CD4-positive, alpha-beta T cell (primary cell): ENCODE measurements at regions of chr12 and their contacts with region 1.

Region 1: GRCh38 chr12:48851883-48852733 is at the start of gene DDX23:
- DNase-seq: peak; percentile 82 to 98 (median 88)
- ATAC-seq: peak; percentile 93
- H3K4me3 ChIP-seq: peak within 1 kb of the TSS; percentile 81
- H3K4me3 Mint-ChIP-seq: peak within 1 kb of the TSS; percentile 98
- H3K27ac ChIP-seq: peak within 1 kb of the TSS; percentile 83 to 94
- H3K27ac Mint-ChIP-seq: peak within 1 kb of the TSS; percentile 93
- H3K4me1 ChIP-seq: peaks cover 47% of the 10 kb centered on the region
- H3K4me1 Mint-ChIP-seq: peaks cover 47% of the 10 kb centered on the region
- H3K27me3 ChIP-seq: no peaks in the 10 kb centered on the region
- H3K27me3 Mint-ChIP-seq: no peaks in the 10 kb centered on the region
- CTCF ChIP-seq: no peak
- total RNA-seq, gene DDX23: 69.4 to 76.5 TPM

Region 2: GRCh38 chr12:48814262-48815125 is 37.6 kb before region 1 on chr12:
- CTCF ChIA-PET with region 1: interaction called, 9 read pairs
- POLR2A ChIA-PET with region 1: interaction called, 16 read pairs
- intact Hi-C with region 1: no loop called
- DNase-seq: peak; percentile 45 to 87 (median 66)
- ATAC-seq: peak; percentile 51
- H3K4me3 ChIP-seq: peak overlapping the region; percentile 76
- H3K4me3 Mint-ChIP-seq: peak overlapping the region; percentile 94
- H3K27ac ChIP-seq: peak overlapping the region in 1 of 2 donors; percentile 24
- H3K27ac Mint-ChIP-seq: no peak overlapping the region
- H3K4me1 ChIP-seq: peaks cover 51% of the 10 kb centered on the region
- H3K4me1 Mint-ChIP-seq: peaks cover 44% of the 10 kb centered on the region
- H3K27me3 ChIP-seq: no peaks in the 10 kb centered on the region
- H3K27me3 Mint-ChIP-seq: no peaks in the 10 kb centered on the region
- CTCF ChIP-seq: peak; percentile 90

Region 3: GRCh38 chr12:48865434-48866290 is 13.6 kb after region 1 on chr12 and contains the start of gene RND1:
- CTCF ChIA-PET with region 1: interaction called, 32 read pairs
- POLR2A ChIA-PET with region 1: interaction called, 60 read pairs
- intact Hi-C with region 1: no loop called
- DNase-seq: peak; percentile 67 to 95 (median 78)
- ATAC-seq: peak; percentile 96
- H3K4me3 ChIP-seq: peak within 1 kb of the TSS; percentile 71
- H3K4me3 Mint-ChIP-seq: peak within 1 kb of the TSS; percentile 90
- H3K27ac ChIP-seq: peak within 1 kb of the TSS in 1 of 2 donors; percentile 25
- H3K27ac Mint-ChIP-seq: peak within 1 kb of the TSS; percentile 72
- H3K4me1 ChIP-seq: peaks cover 23% of the 10 kb centered on the region
- H3K4me1 Mint-ChIP-seq: peaks cover 28% of the 10 kb centered on the region
- H3K27me3 ChIP-seq: peaks cover 20 to 30% of the 10 kb centered on the region in 2 experiments
- H3K27me3 Mint-ChIP-seq: peaks cover 35% of the 10 kb centered on the region
- CTCF ChIP-seq: no peak
- total RNA-seq, gene RND1: 4.8 to 5.7 TPM

Region 4: DNA sequence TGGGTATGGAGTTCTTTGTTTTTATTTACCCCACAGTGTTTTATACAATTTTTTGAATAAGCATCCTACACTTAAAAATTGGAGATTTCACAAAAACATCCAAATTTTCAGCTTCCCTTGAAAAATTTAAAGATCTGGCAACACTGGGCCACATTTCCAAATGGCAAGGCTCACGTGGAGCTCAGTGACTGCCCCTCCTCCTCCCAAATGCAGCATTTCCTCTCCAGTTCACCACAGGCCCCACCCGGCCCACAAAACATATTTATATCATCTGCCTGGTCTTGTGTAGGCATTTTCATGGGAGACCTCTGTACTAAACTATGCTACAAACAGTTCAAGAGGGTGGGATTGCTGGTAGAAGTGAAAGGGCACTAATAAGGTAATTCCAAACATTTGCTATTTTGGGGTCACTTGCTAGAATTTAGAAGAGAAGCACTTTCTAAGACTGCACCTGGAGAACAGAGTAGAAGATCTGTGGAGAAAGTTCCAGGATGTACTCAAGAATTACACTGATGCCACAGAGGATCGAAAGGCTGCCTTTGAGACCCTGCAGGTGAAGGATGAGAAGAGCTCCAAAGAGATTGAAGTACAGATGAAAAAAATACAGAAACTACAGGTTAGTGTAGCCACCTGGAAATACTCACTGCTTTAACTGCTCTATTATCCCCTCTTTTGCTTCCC is 65.9 kb after region 1 on chr12:
- CTCF ChIA-PET with region 1: interaction called, 4 read pairs
- POLR2A ChIA-PET with region 1: interaction called, 31 read pairs
- intact Hi-C with region 1: no loop called
- DNase-seq: peak; percentile 31 to 79 (median 50)
- ATAC-seq: peak; percentile 96
- H3K4me3 ChIP-seq: peak overlapping the region; percentile 63
- H3K4me3 Mint-ChIP-seq: peak overlapping the region; percentile 91
- H3K27ac ChIP-seq: peak overlapping the region; percentile 19 to 64
- H3K27ac Mint-ChIP-seq: peak overlapping the region; percentile 87
- H3K4me1 ChIP-seq: peaks cover 57% of the 10 kb centered on the region
- H3K4me1 Mint-ChIP-seq: peaks cover 45% of the 10 kb centered on the region
- H3K27me3 ChIP-seq: no peaks in the 10 kb centered on the region
- H3K27me3 Mint-ChIP-seq: no peaks in the 10 kb centered on the region
- CTCF ChIP-seq: no peak

Region 5: GRCh38 chr12:48936379-48936979 is 84.4 kb after region 1 on chr12:
- CTCF ChIA-PET with region 1: interaction called, 13 read pairs
- POLR2A ChIA-PET with region 1: interaction called, 8 read pairs
- intact Hi-C with region 1: loop called (anchors 1 kb)
- DNase-seq: peak; percentile 75 to 90 (median 84)
- ATAC-seq: peak; percentile 60
- H3K4me3 ChIP-seq: no peak overlapping the region
- H3K4me3 Mint-ChIP-seq: no peak overlapping the region
- H3K27ac ChIP-seq: no peak overlapping the region
- H3K27ac Mint-ChIP-seq: peak overlapping the region; percentile 32
- H3K4me1 ChIP-seq: peaks cover 55% of the 10 kb centered on the region
- H3K4me1 Mint-ChIP-seq: peaks cover 32% of the 10 kb centered on the region
- H3K27me3 ChIP-seq: no peaks in the 10 kb centered on the region
- H3K27me3 Mint-ChIP-seq: no peaks in the 10 kb centered on the region
- CTCF ChIP-seq: peak; percentile 94

Region 6: DNA sequence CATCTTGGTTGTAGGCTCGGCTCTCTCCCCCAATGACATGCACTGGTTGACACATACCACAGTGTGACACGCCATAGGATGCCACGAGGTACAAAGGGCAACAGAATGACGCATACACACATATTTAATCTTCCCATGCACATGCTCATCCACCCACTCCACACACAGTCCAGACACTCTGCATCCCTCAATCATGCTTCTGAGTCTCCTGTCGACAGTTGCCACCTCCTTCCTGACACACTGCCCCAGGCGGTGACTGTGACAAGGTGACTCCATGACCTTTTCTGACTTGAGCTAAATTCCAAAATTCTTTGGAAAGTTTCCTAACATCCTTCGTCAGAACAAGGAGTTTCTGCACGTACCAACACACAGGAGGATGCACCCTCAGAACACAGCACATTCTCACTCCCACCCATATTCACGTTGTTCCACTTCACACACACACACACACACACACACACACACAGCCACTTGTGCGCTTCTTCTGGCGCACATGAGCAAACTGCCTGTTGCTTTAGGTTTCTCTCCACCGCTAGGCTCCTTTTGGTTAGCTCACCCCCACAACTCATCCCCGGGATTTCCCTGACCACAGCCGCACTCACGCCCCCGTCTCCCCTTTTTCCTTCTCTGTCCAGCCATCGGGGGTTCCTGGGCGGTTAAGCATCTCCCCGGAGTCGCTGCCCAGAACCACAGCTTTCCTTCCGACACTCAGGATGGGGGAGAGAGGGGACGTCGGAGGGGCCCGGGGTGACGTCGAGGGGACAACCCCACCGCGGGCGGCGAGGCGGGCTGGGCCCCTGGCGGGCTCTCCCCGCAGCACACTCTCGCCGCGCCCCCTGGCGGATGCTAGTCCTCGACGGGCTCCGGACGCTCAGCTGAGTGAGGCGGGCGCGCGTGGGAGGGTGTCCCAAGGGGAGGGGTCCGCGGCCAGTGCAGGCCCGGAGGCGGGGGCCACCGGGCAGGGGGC is 125.5 kb after region 1 on chr12:
- CTCF ChIA-PET with region 1: interaction called, 18 read pairs
- POLR2A ChIA-PET with region 1: interaction called, 38 read pairs
- intact Hi-C with region 1: loop called in 1 of 2 experiments (anchors 1 kb)
- DNase-seq: peak; percentile 67 to 93 (median 76)
- ATAC-seq: peak; percentile 47
- H3K4me3 ChIP-seq: no peak overlapping the region
- H3K4me3 Mint-ChIP-seq: peak overlapping the region; percentile 9
- H3K27ac ChIP-seq: no peak overlapping the region
- H3K27ac Mint-ChIP-seq: peak overlapping the region; percentile 16
- H3K4me1 ChIP-seq: peaks cover 64% of the 10 kb centered on the region
- H3K4me1 Mint-ChIP-seq: peaks cover 54% of the 10 kb centered on the region
- H3K27me3 ChIP-seq: peaks cover 33 to 45% of the 10 kb centered on the region in 2 experiments
- H3K27me3 Mint-ChIP-seq: peaks cover 70% of the 10 kb centered on the region
- CTCF ChIP-seq: peak; percentile 79

Region 7: DNA sequence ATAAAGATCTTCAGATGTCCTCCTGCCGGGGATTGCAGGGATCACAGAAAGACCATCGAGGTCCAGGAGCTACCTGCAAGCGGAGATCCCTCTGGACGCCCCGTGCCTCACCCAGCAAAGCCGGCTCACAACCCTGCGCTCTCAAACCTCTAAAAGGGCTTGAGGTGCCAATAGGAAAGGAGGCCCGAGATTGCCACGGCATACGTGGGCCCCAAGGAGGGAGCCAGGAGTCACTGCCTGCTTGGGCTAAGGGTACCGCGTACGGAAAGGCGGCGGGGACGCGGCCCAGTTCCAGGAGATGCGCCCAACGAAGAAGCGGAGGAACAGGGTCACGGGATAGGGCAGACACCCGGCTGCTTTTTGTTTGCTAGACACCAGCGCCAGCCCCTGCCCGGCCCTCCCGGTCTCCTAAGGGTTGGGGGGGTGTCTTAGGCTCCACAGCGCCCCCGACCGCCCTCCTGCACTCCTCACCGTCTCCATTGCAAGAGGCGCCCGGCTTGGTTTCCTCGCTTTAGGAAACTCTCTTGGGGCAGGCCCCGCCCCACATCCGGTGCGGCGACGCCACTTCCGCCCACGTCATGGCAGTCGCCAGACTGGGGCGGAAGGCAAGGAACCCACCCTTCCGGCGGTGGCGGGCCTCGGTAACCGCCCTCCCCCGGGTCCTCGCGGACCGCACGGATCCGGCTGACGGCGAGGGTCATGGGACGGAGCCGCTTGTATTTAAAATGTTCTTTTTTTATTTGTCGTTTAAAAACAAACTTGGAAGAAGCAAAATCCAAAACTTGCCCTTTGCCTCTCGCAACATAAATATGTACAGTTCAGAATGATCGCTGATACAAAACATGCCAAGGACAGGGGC is 166.4 kb after region 1 on chr12 and contains the start of gene PRKAG1:
- CTCF ChIA-PET with region 1: interaction called, 5 read pairs
- POLR2A ChIA-PET with region 1: no interaction called
- intact Hi-C with region 1: loop called in 1 of 2 experiments (anchors 2 kb)
- DNase-seq: peak; percentile 94 to 99 (median 96)
- ATAC-seq: peak; percentile 90
- H3K4me3 ChIP-seq: peak within 1 kb of the TSS; percentile 73
- H3K4me3 Mint-ChIP-seq: peak within 1 kb of the TSS; percentile 97
- H3K27ac ChIP-seq: peak within 1 kb of the TSS; percentile 94 to 97
- H3K27ac Mint-ChIP-seq: peak within 1 kb of the TSS; percentile 99
- H3K4me1 ChIP-seq: peaks cover 27% of the 10 kb centered on the region
- H3K4me1 Mint-ChIP-seq: peaks cover 50% of the 10 kb centered on the region
- H3K27me3 ChIP-seq: no peaks in the 10 kb centered on the region
- H3K27me3 Mint-ChIP-seq: no peaks in the 10 kb centered on the region
- CTCF ChIP-seq: peak; percentile 60
- total RNA-seq, gene PRKAG1: 34.6 to 38.2 TPM

Region 8: DNA sequence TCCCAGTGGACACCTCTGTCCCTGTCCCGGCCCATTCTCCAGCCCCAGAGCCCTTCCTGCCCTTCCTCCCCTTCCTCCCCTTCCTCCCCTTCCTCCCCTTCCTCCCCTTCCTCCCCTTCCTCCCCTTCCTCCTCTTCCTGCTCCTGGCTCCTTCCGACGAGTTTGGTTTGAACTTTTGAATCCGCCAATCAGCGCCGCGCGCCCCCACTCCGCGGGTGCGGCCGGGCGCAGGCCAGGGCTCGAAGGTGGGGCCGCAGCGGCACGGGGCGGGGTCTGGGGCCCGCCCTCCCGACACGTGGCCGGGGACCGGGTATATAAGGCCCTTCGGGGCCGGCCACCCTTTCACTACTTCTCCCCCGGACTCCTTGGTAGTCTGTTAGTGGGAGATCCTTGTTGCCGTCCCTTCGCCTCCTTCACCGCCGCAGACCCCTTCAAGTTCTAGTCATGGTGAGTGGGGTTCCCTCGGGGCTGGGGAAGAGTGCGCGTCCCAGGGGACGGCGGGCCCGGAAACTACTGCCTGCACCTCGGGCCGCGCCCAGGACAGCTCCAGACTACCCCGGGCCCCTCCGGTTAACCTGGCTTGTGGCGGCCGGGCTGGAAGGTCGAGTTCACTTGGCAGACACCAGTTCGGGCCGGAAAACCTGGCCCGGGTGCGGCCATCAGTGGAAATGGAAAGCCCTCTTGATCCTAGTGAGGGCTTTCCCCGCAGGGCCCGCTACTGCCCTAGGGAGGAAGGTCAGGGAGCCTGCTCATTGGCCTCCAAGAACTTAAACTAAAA is 412.8 kb after region 1 on chr12 and contains the start of gene TUBA1C:
- CTCF ChIA-PET with region 1: no interaction called
- POLR2A ChIA-PET with region 1: no interaction called
- intact Hi-C with region 1: no loop called
- DNase-seq: peak; percentile 60 to 91 (median 80)
- ATAC-seq: peak; percentile 80
- H3K4me3 ChIP-seq: peak within 1 kb of the TSS; percentile 86
- H3K4me3 Mint-ChIP-seq: peak within 1 kb of the TSS; percentile 99
- H3K27ac ChIP-seq: peak within 1 kb of the TSS; percentile 57 to 74
- H3K27ac Mint-ChIP-seq: peak within 1 kb of the TSS; percentile 92
- H3K4me1 ChIP-seq: peaks cover 38% of the 10 kb centered on the region
- H3K4me1 Mint-ChIP-seq: peaks cover 23% of the 10 kb centered on the region
- H3K27me3 ChIP-seq: no peaks in the 10 kb centered on the region
- H3K27me3 Mint-ChIP-seq: no peaks in the 10 kb centered on the region
- CTCF ChIP-seq: no peak
- total RNA-seq, gene TUBA1C: 23.4 to 28.9 TPM

Region 9: DNA sequence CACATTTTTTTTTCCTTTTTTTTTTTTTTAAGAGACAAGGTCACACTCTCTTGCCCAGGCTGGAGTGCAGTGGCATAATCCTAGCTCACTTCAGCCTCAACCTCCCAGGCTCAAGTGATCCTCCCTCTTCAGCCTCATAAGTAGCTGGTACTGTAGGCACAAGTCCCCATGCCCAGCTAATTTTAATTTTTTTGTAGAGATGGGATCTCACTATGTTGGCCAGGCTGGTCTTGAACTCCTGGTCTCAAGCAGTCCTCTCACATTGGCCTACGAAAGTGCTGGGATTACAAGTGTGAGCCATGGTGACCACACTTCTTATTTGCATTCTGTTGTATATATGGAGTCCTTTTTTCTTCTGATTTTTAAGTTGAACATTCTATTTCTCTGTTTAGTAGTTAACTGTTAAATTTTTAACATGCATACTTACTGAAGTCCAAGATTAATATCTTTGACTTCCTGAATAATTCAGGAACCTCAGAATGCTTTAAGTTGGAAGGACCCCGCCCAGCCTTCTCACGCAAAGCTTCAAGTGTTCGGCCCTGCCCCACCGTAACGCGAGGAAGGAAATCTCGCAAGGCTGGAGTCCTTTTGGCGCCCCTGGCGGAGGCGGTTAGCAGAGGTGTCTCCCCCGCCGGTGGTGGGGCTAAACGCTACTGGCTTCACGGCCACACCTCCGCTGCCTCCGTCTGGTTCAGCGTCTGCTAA is 536.7 kb after region 1 on chr12:
- CTCF ChIA-PET with region 1: no interaction called
- POLR2A ChIA-PET with region 1: no interaction called
- intact Hi-C with region 1: no loop called
- DNase-seq: peak; percentile 41 to 77 (median 59)
- ATAC-seq: peak; percentile 98
- H3K4me3 ChIP-seq: no peak overlapping the region
- H3K4me3 Mint-ChIP-seq: no peak overlapping the region
- H3K27ac ChIP-seq: no peak overlapping the region
- H3K27ac Mint-ChIP-seq: no peak overlapping the region
- H3K4me1 ChIP-seq: peaks cover 5% of the 10 kb centered on the region
- H3K4me1 Mint-ChIP-seq: peaks cover 8% of the 10 kb centered on the region
- H3K27me3 ChIP-seq: no peaks in the 10 kb centered on the region
- H3K27me3 Mint-ChIP-seq: no peaks in the 10 kb centered on the region
- CTCF ChIP-seq: peak; percentile 55